ENCODE measurements at regions of chr21 and their contacts with region 1.

Region 1: DNA sequence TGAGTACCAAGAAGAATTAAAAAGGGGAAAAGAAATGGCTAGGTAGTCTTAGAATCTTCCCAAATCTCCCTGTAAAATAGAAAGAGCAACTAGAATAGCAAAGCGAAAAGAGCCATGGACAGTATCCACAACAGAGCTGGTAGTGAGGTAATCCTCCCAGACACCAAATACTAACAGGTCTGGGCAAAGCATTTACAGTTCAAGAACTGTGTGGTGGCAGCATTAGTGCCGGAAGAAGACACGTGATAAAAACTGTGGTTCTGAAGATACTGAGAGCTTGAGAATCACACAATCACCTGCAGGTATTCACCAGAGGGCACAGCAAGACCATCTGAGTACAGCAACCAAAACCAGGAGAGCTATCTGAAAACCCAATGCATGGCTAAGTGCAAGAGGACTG is 31.8 kb upstream of the OLIG2 start:
- DNase-seq: no peak
- ATAC-seq: no peak

Region 2: DNA sequence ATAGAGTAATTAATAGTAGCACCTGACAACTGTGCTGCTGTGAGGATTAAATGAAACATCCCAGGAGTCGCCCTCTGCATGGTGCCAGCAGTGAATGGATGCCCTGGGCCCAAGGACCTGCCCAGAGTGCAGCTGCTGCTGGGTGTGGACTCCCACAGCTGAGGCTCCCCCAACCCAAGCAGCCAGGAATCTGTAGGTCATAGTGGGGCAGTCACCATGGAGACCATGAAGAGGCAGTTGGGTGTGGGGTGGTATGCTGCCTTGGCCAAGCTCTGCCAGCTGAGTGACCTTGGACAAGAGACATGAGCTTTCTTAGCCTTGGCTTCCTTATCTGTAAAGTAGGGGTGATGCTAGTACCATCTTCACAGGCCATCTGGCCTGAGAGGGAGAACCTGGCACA is 41.3 kb after region 1 on chr21:
- intact Hi-C with region 1: loop called (anchors 2 kb)
- DNase-seq: no peak
- ATAC-seq: no peak